A549 (cell line): ENCODE measurements at regions of chr1 and their contacts with region 1.

Region 1: DNA sequence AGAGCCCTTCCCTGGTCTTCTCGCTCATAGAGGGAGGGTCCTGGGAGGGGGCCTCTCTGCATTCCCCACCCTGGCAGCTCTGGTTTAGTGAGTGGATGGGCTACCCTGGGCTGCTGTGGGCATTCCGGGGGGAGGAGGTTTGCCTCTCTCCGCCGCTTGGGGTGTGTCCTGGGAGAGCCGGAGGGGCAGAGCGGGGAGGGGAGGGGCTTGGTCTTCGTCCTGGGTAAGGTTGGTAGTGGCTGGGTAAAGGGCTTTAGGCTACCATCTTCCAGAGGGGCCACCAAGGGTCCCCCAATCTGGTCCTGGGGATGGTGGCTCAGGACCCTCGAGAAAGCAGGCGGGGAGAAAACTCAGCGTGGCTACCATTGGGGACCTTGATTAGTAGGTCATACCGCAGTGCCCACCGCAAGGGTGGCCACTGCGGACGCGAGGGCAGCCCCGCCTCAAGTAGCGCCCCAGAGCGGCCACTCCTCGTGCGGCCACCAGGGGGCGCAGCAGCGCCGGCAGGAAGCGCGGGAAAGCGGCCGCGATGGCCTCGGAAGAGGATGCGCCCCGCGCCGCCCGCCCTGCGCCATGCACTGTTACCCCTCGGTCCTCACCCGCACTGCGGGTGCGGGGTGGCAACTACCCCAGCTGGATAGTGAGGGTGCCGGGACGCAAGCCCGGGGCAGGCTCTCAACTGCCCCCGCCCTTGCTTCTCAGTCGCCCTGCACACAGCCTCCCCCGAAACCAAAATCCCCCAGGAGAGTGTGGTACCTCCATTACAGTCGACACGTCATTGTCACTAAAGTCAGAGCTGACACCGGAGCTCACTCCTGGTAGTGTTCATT is 44.1 kb upstream of the SLC25A33 start:
- DNase-seq: peak; percentile 32 to 60
- ATAC-seq: peak; percentile 78 to 90
- H3K4me3 ChIP-seq: peak overlapping the region; percentile 34; the same call in 2 of the 3 replicates
- H3K27ac ChIP-seq: peak overlapping the region in 1 of 2 experiments; percentile 73; a peak in 3 of 6 replicates
- H3K4me1 ChIP-seq: 0 out of 3 replicates have a peak, but pooled peaks cover 3% of the 10 kb centered on the region
- CTCF ChIP-seq: peak; percentile 88
- EP300 ChIP-seq: no peak
- POLR2A ChIP-seq: no peak
- RAD21 ChIP-seq: peak; percentile 54 to 63

Region 2: DNA sequence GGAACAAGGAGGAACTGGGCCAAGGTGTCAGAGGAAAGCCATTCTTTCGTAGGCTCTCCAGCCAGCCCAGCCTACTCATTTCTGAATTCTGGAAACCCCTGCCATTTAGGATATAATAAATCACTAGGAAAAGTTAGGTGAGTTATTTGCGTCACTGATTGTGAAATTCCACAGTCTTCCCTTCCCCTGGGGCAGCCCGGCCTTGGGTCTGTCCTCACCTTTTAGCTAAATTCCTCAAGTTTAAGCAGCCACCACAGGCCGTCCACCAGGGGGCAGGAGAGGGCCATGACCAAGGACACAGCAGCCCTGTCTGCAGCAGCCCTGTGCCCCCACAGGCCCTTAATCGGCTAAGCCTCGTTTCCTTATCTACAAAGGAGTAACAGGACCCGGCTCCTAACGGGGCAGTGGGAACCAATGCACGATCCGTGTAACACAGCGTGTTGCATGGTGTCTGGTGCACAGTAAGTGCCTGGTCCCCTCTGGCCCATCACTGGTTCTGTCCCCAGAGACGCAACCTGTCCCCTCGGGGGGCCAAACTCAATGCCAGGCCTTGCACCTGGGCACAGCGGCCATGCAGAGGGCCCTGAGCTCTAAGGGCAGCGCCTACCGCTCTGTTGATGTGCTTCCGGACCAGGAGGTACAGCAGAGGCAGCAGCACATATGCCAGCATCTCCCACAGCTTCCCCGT is 384.3 kb before region 1 on chr1:
- CTCF ChIA-PET with region 1: interaction called, 11 read pairs
- POLR2A ChIA-PET with region 1: no interaction called
- DNase-seq: peak; percentile 77 to 93
- ATAC-seq: peak; percentile 94 to 97
- H3K4me3 ChIP-seq: no peak overlapping the region
- H3K27ac ChIP-seq: peak overlapping the region; percentile 58 to 88; a peak in 5 of 6 replicates
- H3K4me1 ChIP-seq: peaks cover 33% of the 10 kb centered on the region
- CTCF ChIP-seq: peak; percentile 77
- EP300 ChIP-seq: peak; percentile 12 to 63; a peak in 3 of 5 replicates
- POLR2A ChIP-seq: no peak
- RAD21 ChIP-seq: peak; percentile 90 to 92

Region 3: DNA sequence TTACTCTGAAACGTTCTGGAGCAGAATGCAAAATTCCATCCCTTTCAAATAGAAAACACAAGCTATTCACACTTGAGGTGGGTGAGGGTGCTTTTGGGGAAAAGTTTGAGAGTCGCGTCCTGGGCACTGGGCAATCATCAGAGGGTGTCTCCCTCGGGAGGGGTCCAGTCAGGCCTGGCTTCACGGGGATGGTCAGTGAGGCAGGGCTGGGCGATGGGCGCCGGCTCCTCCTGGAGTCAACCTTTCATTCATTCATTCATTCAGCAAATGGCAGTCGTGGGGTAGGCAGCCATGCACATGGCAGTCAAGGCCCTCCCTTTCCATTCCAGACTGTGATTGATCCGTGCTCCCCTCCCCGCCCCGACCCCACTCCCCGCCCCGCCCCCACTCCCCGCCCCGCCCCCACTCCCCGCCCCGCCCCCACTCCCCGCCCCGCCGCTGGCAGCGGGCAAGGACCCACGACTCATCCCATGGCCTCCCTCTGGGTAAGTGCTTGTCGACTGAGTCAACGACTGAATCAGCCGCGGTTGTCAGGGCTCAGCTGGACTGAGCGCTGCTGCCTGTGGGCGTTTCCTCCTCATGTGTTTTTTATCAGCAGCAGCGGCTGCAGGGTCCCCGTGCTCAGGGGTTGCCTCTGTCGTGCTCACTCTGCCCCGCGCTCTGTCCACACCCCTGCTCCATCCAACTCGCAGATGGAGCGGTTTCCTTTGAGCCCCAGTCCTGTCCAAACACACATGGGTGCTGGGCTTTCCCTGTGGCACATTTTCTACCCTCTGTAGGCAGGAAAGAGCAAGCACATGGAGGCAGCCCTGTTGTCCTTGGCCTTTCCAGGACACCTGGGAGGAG is 214.9 kb before region 1 on chr1:
- CTCF ChIA-PET with region 1: interaction called, 16 read pairs
- POLR2A ChIA-PET with region 1: no interaction called
- DNase-seq: peak; percentile 75 to 89
- ATAC-seq: peak; percentile 90 to 94
- H3K4me3 ChIP-seq: no peak overlapping the region
- H3K27ac ChIP-seq: peak overlapping the region; percentile 57 to 72; a peak in 5 of 6 replicates
- H3K4me1 ChIP-seq: peaks cover 28% of the 10 kb centered on the region
- CTCF ChIP-seq: no peak
- EP300 ChIP-seq: no peak
- POLR2A ChIP-seq: no peak
- RAD21 ChIP-seq: no peak

Region 4: GRCh38 chr1:9473032-9473792 is 21.9 kb before region 1 on chr1:
- CTCF ChIA-PET with region 1: interaction called, 16 read pairs
- POLR2A ChIA-PET with region 1: no interaction called
- DNase-seq: peak; percentile 79 to 95
- ATAC-seq: peak; percentile 98 to 99
- H3K4me3 ChIP-seq: no peak overlapping the region
- H3K27ac ChIP-seq: peak overlapping the region in 1 of 2 experiments; percentile 69; a peak in 3 of 6 replicates
- H3K4me1 ChIP-seq: peaks cover 23% of the 10 kb centered on the region
- CTCF ChIP-seq: no peak
- EP300 ChIP-seq: no peak
- POLR2A ChIP-seq: no peak
- RAD21 ChIP-seq: no peak

Region 5: DNA sequence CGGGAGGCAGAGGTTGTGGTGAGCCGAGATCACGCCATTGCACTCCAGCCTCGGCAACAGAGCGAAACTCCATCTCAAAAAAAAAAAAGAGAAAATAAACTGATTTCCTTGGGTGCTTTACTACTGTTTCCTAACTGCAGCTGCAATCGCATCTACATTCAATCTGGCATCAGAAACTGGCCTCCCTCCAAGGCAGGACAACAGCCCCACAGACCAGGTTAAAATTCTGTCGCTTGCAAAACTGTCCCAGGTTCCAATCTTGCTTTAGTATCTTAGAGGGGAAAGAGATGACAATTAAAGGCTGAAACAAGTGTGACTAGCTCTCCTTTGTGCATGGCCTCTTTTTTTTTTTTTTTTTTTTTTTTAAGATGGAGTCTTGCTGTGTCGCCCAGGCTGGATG is 11.8 kb after region 1 on chr1:
- CTCF ChIA-PET with region 1: interaction called, 12 read pairs
- POLR2A ChIA-PET with region 1: no interaction called
- DNase-seq: no peak
- ATAC-seq: no peak
- H3K4me3 ChIP-seq: no peak overlapping the region
- H3K27ac ChIP-seq: no peak overlapping the region
- H3K4me1 ChIP-seq: no peaks in the 10 kb centered on the region
- CTCF ChIP-seq: no peak
- EP300 ChIP-seq: no peak
- POLR2A ChIP-seq: no peak
- RAD21 ChIP-seq: no peak

Region 6: DNA sequence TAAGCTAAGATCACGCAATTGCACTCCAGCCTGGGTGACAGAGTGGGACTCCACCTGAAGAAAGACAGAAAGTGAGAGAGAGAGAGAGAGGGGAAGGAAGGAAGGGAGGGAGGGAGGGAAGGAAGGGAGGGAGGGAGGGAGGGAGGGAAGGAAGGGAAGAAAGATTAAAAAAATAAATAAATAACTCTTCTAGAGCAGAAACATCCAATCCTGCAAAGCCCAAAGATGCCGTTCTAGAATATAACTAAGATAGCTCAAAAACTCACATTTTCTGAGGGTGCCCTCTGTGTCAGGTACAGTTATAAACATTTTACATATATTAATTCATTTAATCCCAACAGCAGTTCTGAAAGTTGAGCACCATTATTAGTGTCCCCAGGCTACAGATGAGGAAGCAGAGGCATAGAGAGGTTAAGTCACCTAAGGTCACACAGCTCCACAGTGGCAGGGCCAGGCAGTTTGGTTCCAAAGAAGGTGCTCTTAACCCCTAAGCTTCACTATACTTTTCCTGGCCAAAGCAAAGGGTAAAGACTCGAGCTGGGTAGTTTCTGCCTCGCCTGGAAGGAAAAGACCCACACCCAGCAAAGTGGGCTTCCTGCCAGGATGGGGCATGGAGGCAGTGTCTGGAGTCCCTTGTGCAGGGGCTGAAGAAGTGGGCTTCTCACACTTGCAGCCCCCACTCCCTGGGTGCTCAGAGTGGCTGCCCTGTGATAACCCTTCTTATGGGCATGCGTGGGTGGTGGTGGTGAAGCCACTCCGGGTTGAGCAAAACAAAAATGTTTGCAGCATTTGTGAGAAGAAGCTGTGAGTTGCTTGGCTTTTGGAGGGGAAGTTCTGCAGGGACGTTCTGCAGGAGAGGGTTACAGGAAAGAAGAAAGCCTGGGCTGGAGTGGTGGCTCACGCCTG is 148.5 kb after region 1 on chr1:
- CTCF ChIA-PET with region 1: no interaction called
- POLR2A ChIA-PET with region 1: no interaction called
- DNase-seq: no peak
- ATAC-seq: no peak
- H3K4me3 ChIP-seq: no peak overlapping the region
- H3K27ac ChIP-seq: no peak overlapping the region
- H3K4me1 ChIP-seq: no peaks in the 10 kb centered on the region
- CTCF ChIP-seq: no peak
- EP300 ChIP-seq: no peak
- POLR2A ChIP-seq: no peak
- RAD21 ChIP-seq: no peak

Region 7: DNA sequence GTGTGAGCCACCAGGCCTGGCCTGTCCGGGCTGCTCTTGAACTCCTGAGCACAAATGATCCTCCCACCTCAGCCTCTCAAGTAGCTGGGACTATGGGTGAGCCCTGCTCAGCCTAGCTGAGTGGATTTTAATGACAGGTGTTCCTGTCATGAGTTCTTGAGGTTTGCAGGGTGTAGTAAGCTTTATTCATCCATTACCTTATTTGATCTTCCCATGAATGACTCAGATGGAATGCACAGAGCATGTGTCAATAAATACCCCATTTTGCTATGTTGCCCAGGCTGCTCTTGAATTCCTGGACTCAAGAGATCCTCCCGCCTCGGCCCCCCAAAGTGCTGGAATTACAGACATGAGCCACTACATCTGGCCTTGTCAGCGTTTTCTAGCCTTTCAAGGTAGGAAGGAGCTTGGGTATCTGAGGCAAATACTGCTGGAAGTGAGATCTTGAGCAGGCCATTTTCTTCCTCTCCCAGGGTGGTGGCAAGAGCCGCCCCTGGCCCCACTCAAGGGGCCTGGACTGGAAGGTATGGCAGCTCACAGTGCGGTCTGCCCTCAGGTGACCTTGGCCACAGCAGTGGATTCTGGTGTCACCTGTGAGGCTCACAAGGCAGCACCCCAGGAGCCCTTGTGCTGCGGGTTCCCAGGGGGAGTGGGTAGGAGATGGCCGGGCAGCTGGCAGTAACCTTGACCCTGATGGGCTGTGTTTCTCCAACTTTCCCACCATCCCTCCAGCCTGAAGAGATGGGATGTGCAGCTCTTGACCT is 176.4 kb after region 1 on chr1:
- CTCF ChIA-PET with region 1: no interaction called
- POLR2A ChIA-PET with region 1: no interaction called
- DNase-seq: peak; percentile 66 to 69
- ATAC-seq: peak; percentile 76 to 83
- H3K4me3 ChIP-seq: no peak overlapping the region
- H3K27ac ChIP-seq: peak overlapping the region in 1 of 2 experiments; percentile 76; a peak in 3 of 6 replicates
- H3K4me1 ChIP-seq: peaks cover 11% of the 10 kb centered on the region; the same call in 2 of the 3 replicates
- CTCF ChIP-seq: no peak
- EP300 ChIP-seq: no peak
- POLR2A ChIP-seq: no peak
- RAD21 ChIP-seq: no peak